ENCODE measurements at regions of chr1 and their contacts with region 1.

Region 1: DNA sequence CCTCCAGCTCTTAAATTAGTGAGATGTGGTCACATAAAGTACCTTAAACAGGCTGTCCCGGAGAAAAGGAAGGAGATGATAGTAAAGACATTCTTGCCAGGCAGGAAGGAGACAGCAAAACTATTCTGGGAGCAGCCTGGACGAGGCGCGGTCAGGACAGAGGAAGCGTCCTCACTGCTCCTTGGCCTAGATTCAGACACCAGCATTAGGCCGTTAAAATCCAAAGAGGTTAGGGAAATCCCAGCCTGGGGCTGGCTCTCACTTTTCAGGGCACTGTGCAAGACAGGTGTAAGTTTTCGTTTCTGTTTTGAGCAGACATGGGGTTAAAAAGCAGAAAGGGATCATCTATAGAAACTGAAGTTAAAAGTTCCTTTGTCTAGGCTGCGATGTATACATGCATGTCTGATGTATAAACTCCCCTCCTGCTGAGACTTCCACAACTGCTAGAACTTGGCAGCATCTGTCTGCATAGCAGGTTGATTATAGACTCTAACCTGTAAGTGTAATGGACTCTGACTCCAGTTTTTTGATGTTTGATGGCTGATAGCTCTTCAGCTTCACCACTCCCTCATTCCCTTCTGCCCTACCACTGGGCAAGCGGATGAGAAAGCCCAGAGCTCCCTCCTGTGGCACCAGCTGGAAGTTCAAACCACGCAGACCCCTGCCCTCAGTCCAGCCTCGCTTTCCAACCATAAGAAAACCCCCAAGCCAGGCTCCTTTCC is 21.5 kb downstream of the STPG1 start:
- DNase-seq: no peak
- H3K4me3 ChIP-seq: no peak overlapping the region
- CTCF ChIP-seq: peak; percentile 78

Region 2: GRCh38 chr1:24150234-24151174 is 241.5 kb before region 1 on chr1:
- CTCF ChIA-PET with region 1: interaction called, 102 read pairs
- POLR2A ChIA-PET with region 1: no interaction called
- DNase-seq: no peak
- H3K4me3 ChIP-seq: no peak overlapping the region; the same call in 1 of the 2 replicates
- CTCF ChIP-seq: peak; percentile 94

Region 3: GRCh38 chr1:24248859-24249258 is 143.2 kb before region 1 on chr1:
- CTCF ChIA-PET with region 1: interaction called, 10 read pairs
- POLR2A ChIA-PET with region 1: no interaction called
- DNase-seq: no peak
- H3K4me3 ChIP-seq: no peak overlapping the region
- CTCF ChIP-seq: no peak

Region 4: DNA sequence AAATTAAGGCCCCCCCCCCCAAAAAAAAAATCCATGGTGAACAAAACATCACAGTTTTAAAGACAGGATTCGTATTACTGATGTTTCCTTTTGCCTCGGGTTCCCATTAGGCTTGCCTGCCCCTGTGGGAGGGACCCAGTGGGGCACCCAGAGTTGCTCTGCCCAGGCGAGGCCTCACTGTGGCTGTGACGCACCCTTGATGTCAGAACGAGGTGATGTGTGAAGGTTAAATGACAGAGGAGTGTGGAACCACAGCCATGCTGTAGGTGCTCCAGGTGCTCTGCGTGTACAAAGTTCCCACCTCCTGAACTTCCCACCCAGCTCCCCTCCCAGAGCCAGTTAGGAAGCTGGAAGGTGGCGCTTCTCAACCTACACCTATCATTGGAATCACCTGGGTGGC is 35.0 kb before region 1 on chr1:
- CTCF ChIA-PET with region 1: interaction called, 29 read pairs
- POLR2A ChIA-PET with region 1: no interaction called
- DNase-seq: no peak
- H3K4me3 ChIP-seq: no peak overlapping the region
- CTCF ChIP-seq: no peak

Region 5: DNA sequence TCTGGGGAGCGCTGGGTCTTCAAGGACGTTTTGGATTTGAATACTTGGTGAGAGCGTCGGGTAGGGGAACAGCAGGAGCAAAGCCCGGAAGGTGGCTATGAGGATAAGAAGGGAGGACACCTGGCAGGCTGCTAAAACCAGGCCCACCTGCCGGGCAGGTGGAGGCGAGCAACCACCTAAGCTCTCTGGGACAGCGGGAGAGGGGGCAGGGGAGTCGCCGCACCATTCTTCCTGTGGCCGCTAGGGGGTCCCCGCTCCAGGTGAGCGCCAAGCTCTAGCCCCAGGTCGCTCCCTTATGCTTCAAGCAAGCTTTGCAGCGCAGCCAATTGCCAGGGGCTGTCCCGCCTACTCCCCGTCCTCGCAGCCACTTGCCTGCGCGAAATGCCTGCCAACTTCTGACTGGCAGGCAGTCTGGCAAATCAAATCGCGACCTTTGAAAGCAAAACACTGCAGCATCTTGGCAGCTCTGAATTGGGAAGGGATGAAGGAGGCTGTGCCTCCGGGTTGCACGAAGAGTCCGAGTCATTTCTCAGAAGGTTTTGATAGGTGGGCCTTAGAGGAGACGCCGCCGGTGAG is 23.4 kb after region 1 on chr1 and contains the start of gene NIPAL3:
- CTCF ChIA-PET with region 1: interaction called, 140 read pairs
- POLR2A ChIA-PET with region 1: interaction called, 4 read pairs
- DNase-seq: peak; percentile 96
- H3K4me3 ChIP-seq: peak within 1 kb of the TSS; percentile 87
- CTCF ChIP-seq: peak; percentile 91

Region 6: GRCh38 chr1:24635195-24635843 is 243.3 kb after region 1 on chr1:
- CTCF ChIA-PET with region 1: interaction called, 87 read pairs
- POLR2A ChIA-PET with region 1: no interaction called
- DNase-seq: peak; percentile 56
- H3K4me3 ChIP-seq: no peak overlapping the region
- CTCF ChIP-seq: peak; percentile 56

Region 7: DNA sequence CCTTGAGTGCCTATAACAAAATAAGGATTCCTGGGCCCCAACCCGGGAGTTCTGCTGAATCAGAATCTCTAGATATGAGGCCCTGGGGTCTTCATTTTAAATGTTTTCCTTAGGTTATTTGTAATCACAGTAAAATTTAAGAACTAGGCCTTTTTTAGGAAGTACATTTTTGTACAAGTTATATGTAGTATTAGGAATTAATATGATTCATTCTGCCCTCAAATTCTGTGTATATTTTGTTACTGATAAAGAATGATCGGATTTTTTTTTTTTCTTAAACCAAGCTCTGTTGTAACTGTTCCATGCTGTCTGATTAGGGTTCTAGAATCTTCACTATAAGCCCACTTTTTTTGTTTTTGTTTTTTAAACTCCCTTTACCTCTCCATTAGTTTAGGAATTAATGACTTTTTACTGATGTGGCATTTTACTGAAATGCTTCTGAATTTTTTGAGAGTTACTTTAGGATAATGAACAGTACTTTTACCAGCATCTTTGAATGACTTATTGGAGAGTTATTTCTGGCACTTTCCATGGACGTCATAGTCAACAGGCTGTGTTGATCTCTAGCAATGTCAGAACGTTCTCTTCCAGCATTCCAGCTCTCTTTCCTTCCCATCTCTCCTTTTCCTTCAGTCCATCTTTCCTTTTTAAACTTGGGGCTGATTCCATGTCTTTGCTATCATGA is 401.5 kb after region 1 on chr1:
- CTCF ChIA-PET with region 1: no interaction called
- POLR2A ChIA-PET with region 1: no interaction called
- DNase-seq: peak; percentile 62
- H3K4me3 ChIP-seq: no peak overlapping the region
- CTCF ChIP-seq: no peak